Transverse colon (tissue), 4 donors: ENCODE measurements at regions of chr5 and their contacts with region 1.

Region 1: DNA sequence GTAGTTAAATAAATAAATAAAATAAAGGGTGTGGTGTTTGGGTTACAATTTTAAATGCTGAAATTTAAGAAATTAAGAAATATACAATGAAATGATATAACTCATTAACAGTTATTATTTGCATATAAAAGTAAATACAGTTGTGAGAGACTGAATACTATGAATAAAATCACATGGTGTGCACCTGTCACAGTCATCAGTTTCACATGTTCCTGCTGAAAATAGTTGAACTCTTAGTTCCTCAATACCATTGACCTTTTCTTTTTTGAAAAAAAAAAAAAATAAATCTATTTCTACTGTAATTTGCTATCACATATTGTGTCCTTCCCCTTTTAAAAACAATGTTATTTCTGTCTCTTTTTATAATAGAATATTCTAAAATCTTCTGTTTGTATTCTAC is 130.9 kb upstream of the CHD1 start:
- DNase-seq: no peak
- H3K4me3 ChIP-seq: no peak overlapping the region
- H3K27ac ChIP-seq: no peak overlapping the region
- H3K4me1 ChIP-seq: peaks cover 0 to 16% (median 3%) of the 10 kb centered on the region in 4 donors
- H3K27me3 ChIP-seq: no peaks in the 10 kb centered on the region
- CTCF ChIP-seq: no peak
- EP300 ChIP-seq: no peak
- POLR2A ChIP-seq: no peak

Region 2: DNA sequence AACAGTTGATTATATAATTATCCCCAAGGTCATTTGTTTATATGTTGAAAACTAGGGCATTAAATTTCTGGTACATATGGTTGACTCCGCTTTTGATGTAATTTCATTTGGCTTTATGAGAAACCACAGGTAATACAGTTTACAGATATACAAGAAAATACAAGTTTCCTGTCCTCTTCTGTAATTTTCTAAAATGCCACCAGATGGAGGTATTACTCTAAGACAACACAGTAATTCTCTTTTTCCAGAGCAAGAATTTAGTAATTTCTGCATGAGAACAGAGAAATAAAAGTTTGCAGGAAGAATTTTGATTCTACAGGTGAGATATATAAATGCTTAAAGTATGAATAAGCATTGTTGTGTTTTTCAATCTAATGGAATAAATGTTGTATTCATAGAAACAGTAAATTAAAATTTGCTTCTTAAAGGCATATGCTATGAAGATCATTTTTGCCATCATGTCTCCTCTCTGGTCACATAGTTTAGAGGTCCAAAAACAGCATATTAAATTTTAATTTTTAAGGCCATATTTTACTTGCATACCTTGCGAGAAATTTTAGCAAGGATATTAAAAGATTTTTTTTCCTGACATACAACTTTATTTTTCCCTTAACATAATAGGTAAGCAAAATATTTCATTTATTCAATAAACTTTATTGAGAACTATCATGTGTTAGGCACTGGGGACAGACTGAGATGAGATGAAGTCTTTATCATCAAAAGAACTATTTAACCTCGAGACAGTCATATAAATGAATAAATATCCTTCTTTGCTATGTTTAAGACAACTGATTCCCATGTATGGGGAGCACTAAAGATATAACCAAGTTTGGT is 153.6 kb before region 1 on chr5:
- in situ Hi-C with region 1: loop called in 1 of 4 experiments (anchors 10 kb)
- intact Hi-C with region 1: no loop called
- DNase-seq: no peak
- H3K4me3 ChIP-seq: no peak overlapping the region
- H3K27ac ChIP-seq: no peak overlapping the region
- H3K4me1 ChIP-seq: peaks cover 0 to 23% (median 3%) of the 10 kb centered on the region in 4 donors
- H3K27me3 ChIP-seq: no peaks in the 10 kb centered on the region
- CTCF ChIP-seq: peak; percentile 76 to 85 (median 79)
- EP300 ChIP-seq: no peak
- POLR2A ChIP-seq: no peak